Right cardiac atrium (tissue), 5 donors: ENCODE measurements at regions of chr14 and their contacts with region 1.

Region 1: GRCh38 chr14:49828640-49829039 is 23.9 kb downstream of the NEMF start:
- DNase-seq: no peak
- ATAC-seq: no peak
- H3K4me3 ChIP-seq: no peak overlapping the region
- H3K27ac ChIP-seq: no peak overlapping the region
- H3K4me1 ChIP-seq: no peaks in the 10 kb centered on the region
- H3K27me3 ChIP-seq: no peaks in the 10 kb centered on the region

Region 2: GRCh38 chr14:49633640-49634546 is 194.7 kb before region 1 on chr14:
- intact Hi-C with region 1: loop called in 1 of 4 experiments (anchors 10 kb)
- DNase-seq: peak; percentile 95 to 97 (median 97)
- ATAC-seq: peak; percentile 95 to 96
- H3K4me3 ChIP-seq: peak overlapping the region; percentile 74
- H3K27ac ChIP-seq: peak overlapping the region; percentile 90
- H3K4me1 ChIP-seq: peaks cover 2% of the 10 kb centered on the region
- H3K27me3 ChIP-seq: no peaks in the 10 kb centered on the region

Region 3: GRCh38 chr14:49745191-49745590 is 83.4 kb before region 1 on chr14:
- intact Hi-C with region 1: no loop called
- DNase-seq: no peak
- ATAC-seq: no peak
- H3K4me3 ChIP-seq: no peak overlapping the region
- H3K27ac ChIP-seq: no peak overlapping the region
- H3K4me1 ChIP-seq: no peaks in the 10 kb centered on the region
- H3K27me3 ChIP-seq: no peaks in the 10 kb centered on the region

Region 4: GRCh38 chr14:49786315-49787110 is 42.1 kb before region 1 on chr14:
- intact Hi-C with region 1: loop called in 2 of 4 experiments (anchors 10 kb)
- DNase-seq: no peak
- ATAC-seq: no peak
- H3K4me3 ChIP-seq: no peak overlapping the region
- H3K27ac ChIP-seq: no peak overlapping the region
- H3K4me1 ChIP-seq: no peaks in the 10 kb centered on the region
- H3K27me3 ChIP-seq: no peaks in the 10 kb centered on the region

Region 5: GRCh38 chr14:50109342-50109741 is 280.7 kb after region 1 on chr14:
- intact Hi-C with region 1: no loop called
- DNase-seq: no peak
- ATAC-seq: no peak
- H3K4me3 ChIP-seq: no peak overlapping the region
- H3K27ac ChIP-seq: no peak overlapping the region
- H3K4me1 ChIP-seq: no peaks in the 10 kb centered on the region
- H3K27me3 ChIP-seq: no peaks in the 10 kb centered on the region